CD4-positive, alpha-beta T cell (primary cell): ENCODE measurements at regions of chr14 and their contacts with region 1.

Region 1: DNA sequence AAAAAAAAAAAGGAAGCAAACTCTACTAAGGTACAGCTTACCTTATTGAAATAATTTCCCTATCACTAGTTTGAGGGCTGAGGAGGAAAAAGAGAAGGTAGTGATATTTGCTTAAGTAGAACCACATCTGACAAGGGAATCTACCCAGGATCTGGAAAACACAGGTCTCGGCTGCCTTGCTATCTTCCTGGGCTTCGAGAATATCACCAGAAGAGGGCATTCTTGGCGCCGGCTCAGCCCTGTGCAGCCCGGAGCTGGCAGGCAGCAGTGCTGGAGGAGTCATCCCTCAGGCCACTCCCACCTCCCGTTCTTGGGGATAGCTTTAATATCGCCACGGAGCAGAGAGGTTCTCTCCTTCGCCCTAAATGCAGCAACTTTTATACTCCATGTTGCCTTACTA is 1181.2 kb downstream of the VRK1 start:
- DNase-seq: peak; percentile 59 to 89 (median 76)
- ATAC-seq: peak; percentile 72
- H3K4me3 ChIP-seq: peak overlapping the region; percentile 76
- H3K4me3 Mint-ChIP-seq: peak overlapping the region; percentile 89
- H3K27ac ChIP-seq: peak overlapping the region; percentile 74 to 82
- H3K27ac Mint-ChIP-seq: peak overlapping the region; percentile 94
- H3K4me1 ChIP-seq: peaks cover 48% of the 10 kb centered on the region
- H3K4me1 Mint-ChIP-seq: peaks cover 84% of the 10 kb centered on the region
- H3K27me3 ChIP-seq: no peaks in the 10 kb centered on the region
- H3K27me3 Mint-ChIP-seq: no peaks in the 10 kb centered on the region
- CTCF ChIP-seq: peak; percentile 69

Region 2: GRCh38 chr14:97707603-97708002 is 270.7 kb before region 1 on chr14:
- CTCF ChIA-PET with region 1: interaction called, 5 read pairs
- POLR2A ChIA-PET with region 1: interaction called, 7 read pairs
- intact Hi-C with region 1: loop called (anchors 10 kb)
- DNase-seq: peak in 5 of 14 experiments; percentile 18 to 65 (median 51)
- ATAC-seq: peak; percentile 14
- H3K4me3 ChIP-seq: no peak overlapping the region
- H3K4me3 Mint-ChIP-seq: peak overlapping the region; percentile 16
- H3K27ac ChIP-seq: peak overlapping the region in 1 of 2 donors; percentile 29
- H3K27ac Mint-ChIP-seq: peak overlapping the region; percentile 71
- H3K4me1 ChIP-seq: peaks cover 62% of the 10 kb centered on the region
- H3K4me1 Mint-ChIP-seq: peaks cover 100% of the 10 kb centered on the region
- H3K27me3 ChIP-seq: no peaks in the 10 kb centered on the region
- H3K27me3 Mint-ChIP-seq: no peaks in the 10 kb centered on the region
- CTCF ChIP-seq: no peak

Region 3: GRCh38 chr14:97994020-97994531 is 15.7 kb after region 1 on chr14:
- CTCF ChIA-PET with region 1: interaction called, 15 read pairs
- POLR2A ChIA-PET with region 1: interaction called, 46 read pairs
- intact Hi-C with region 1: loop called in 1 of 2 experiments (anchors 1 kb)
- DNase-seq: peak in 9 of 14 experiments; percentile 14 to 87 (median 50)
- ATAC-seq: peak; percentile 81
- H3K4me3 ChIP-seq: no peak overlapping the region
- H3K4me3 Mint-ChIP-seq: peak overlapping the region; percentile 43
- H3K27ac ChIP-seq: peak overlapping the region; percentile 68 to 75
- H3K27ac Mint-ChIP-seq: peak overlapping the region; percentile 93
- H3K4me1 ChIP-seq: peaks cover 51% of the 10 kb centered on the region
- H3K4me1 Mint-ChIP-seq: peaks cover 88% of the 10 kb centered on the region
- H3K27me3 ChIP-seq: no peaks in the 10 kb centered on the region
- H3K27me3 Mint-ChIP-seq: no peaks in the 10 kb centered on the region
- CTCF ChIP-seq: no peak

Region 4: DNA sequence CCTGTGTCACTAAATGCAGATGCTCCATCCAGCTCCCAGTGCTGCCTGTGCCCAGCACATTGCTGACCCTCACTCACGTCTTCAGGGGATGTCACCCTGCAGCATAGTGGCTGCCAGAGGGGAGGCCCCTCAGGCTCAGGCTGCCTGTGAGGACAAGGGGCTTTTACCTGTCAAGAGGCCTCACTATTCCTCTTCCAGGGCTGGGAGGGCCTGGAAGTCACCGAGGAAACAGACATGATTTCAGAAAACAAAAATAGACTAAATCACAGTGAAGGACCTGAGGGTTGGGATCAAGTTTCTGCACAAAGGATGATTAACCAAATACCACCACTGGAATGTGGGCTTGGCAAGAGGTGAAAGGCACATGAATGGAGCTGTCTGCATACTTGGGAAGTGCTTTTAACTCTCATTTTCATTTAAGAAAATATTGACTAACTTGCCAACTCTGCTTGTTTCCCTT is 91.4 kb after region 1 on chr14:
- CTCF ChIA-PET with region 1: no interaction called
- POLR2A ChIA-PET with region 1: no interaction called
- intact Hi-C with region 1: no loop called
- DNase-seq: no peak
- ATAC-seq: no peak
- H3K4me3 ChIP-seq: no peak overlapping the region
- H3K4me3 Mint-ChIP-seq: no peak overlapping the region
- H3K27ac ChIP-seq: no peak overlapping the region
- H3K27ac Mint-ChIP-seq: no peak overlapping the region
- H3K4me1 ChIP-seq: no peaks in the 10 kb centered on the region
- H3K4me1 Mint-ChIP-seq: peaks cover 4% of the 10 kb centered on the region
- H3K27me3 ChIP-seq: no peaks in the 10 kb centered on the region
- H3K27me3 Mint-ChIP-seq: no peaks in the 10 kb centered on the region
- CTCF ChIP-seq: no peak

Region 5: DNA sequence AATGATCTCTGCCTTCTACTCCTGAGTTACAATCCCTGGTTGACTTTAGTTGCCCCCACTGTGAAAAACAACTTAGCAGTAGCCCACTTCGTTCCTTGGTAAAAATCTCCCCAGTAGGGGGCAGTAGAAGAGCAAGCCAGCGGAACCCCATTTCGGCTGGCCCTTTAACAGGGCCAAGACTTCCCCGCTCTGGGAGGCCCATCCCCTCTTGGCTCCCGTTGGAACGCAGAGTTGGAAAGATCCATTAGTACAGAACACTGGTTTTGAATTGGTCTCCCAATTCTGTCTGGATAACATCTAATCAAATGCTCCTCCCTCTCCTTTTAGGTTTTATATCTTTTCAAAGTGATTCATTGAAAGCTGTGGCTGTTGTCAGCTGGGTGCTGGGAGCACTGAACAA is 160.3 kb after region 1 on chr14:
- CTCF ChIA-PET with region 1: interaction called, 13 read pairs
- POLR2A ChIA-PET with region 1: interaction called, 167 read pairs
- intact Hi-C with region 1: loop called (anchors 2 kb)
- DNase-seq: peak; percentile 48 to 88 (median 64)
- ATAC-seq: peak; percentile 47
- H3K4me3 ChIP-seq: peak overlapping the region; percentile 41
- H3K4me3 Mint-ChIP-seq: peak overlapping the region; percentile 80
- H3K27ac ChIP-seq: peak overlapping the region; percentile 56 to 71
- H3K27ac Mint-ChIP-seq: peak overlapping the region; percentile 92
- H3K4me1 ChIP-seq: peaks cover 65% of the 10 kb centered on the region
- H3K4me1 Mint-ChIP-seq: peaks cover 99% of the 10 kb centered on the region
- H3K27me3 ChIP-seq: no peaks in the 10 kb centered on the region
- H3K27me3 Mint-ChIP-seq: no peaks in the 10 kb centered on the region
- CTCF ChIP-seq: peak; percentile 94

Region 6: GRCh38 chr14:98189062-98189461 is 210.7 kb after region 1 on chr14:
- CTCF ChIA-PET with region 1: interaction called, 3 read pairs
- POLR2A ChIA-PET with region 1: interaction called, 27 read pairs
- intact Hi-C with region 1: no loop called
- DNase-seq: peak in 5 of 14 experiments; percentile 51 to 85 (median 55)
- ATAC-seq: peak; percentile 31
- H3K4me3 ChIP-seq: peak overlapping the region; percentile 24
- H3K4me3 Mint-ChIP-seq: peak overlapping the region; percentile 80
- H3K27ac ChIP-seq: peak overlapping the region; percentile 76 to 87
- H3K27ac Mint-ChIP-seq: peak overlapping the region; percentile 93
- H3K4me1 ChIP-seq: peaks cover 92% of the 10 kb centered on the region
- H3K4me1 Mint-ChIP-seq: peaks cover 100% of the 10 kb centered on the region
- H3K27me3 ChIP-seq: no peaks in the 10 kb centered on the region
- H3K27me3 Mint-ChIP-seq: no peaks in the 10 kb centered on the region
- CTCF ChIP-seq: no peak

Region 7: GRCh38 chr14:98593361-98593761 is 615.0 kb after region 1 on chr14:
- CTCF ChIA-PET with region 1: no interaction called
- POLR2A ChIA-PET with region 1: no interaction called
- intact Hi-C with region 1: no loop called
- DNase-seq: no peak
- ATAC-seq: no peak
- H3K4me3 ChIP-seq: no peak overlapping the region
- H3K4me3 Mint-ChIP-seq: no peak overlapping the region
- H3K27ac ChIP-seq: no peak overlapping the region
- H3K27ac Mint-ChIP-seq: no peak overlapping the region
- H3K4me1 ChIP-seq: no peaks in the 10 kb centered on the region
- H3K4me1 Mint-ChIP-seq: no peaks in the 10 kb centered on the region
- H3K27me3 ChIP-seq: no peaks in the 10 kb centered on the region
- H3K27me3 Mint-ChIP-seq: no peaks in the 10 kb centered on the region
- CTCF ChIP-seq: no peak

Region 8: GRCh38 chr14:99192028-99192621 is 1213.8 kb after region 1 on chr14:
- CTCF ChIA-PET with region 1: interaction called, 3 read pairs
- POLR2A ChIA-PET with region 1: interaction called, 6 read pairs
- intact Hi-C with region 1: loop called in 1 of 2 experiments (anchors 5 kb)
- DNase-seq: peak in 5 of 14 experiments; percentile 40 to 72 (median 64)
- ATAC-seq: peak; percentile 40
- H3K4me3 ChIP-seq: peak overlapping the region; percentile 59
- H3K4me3 Mint-ChIP-seq: peak overlapping the region; percentile 89
- H3K27ac ChIP-seq: peak overlapping the region; percentile 77 to 81
- H3K27ac Mint-ChIP-seq: peak overlapping the region; percentile 95
- H3K4me1 ChIP-seq: peaks cover 99% of the 10 kb centered on the region
- H3K4me1 Mint-ChIP-seq: peaks cover 97% of the 10 kb centered on the region
- H3K27me3 ChIP-seq: no peaks in the 10 kb centered on the region
- H3K27me3 Mint-ChIP-seq: no peaks in the 10 kb centered on the region
- CTCF ChIP-seq: no peak